Dorsolateral prefrontal cortex (tissue), 120 donors: ENCODE measurements at regions of chr1 and their contacts with region 1.

Region 1: DNA sequence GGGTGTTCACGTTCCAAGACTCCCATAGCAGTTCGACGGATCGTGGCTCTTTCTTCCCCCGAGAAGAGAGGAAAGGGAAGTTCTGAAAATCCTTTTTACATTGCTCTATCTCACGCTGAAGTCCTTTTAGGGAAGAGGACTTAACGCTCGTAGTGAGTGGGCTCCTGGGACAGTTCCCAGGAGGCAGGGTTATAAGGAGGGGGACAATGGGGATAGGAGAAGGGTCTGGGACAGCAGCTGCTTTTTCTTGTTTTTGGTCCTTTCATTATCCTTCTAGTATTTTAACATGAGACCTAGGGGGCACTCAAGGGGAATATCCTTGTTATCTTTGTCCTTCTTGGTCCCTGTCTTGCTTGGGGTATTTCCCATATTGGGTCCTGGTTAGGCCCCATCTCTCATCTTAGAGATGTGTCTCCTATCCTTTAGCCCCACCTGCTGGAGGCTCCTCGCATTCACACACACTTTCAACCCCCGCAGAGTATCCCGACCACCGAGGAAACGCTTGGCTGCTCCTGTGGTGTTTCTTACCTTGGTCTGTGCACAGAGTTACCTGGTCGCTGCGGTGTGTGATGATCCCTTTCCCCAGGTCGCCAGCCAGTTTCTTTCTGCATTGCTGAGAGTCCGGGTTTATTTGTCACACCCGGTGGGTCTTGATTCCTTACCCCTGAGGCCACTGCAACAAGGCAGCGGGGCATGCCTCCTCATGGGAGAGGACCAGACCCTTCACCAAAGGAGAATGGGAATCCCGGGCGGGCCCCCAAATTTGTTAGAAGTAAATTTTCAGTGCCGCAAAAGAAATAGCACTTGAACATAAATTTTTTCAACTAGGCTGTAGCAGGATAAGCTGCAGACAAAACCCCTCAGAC is 29.7 kb downstream of the SCCPDH start:
- DNase-seq: peak in 7 of 10 donors; percentile 46 to 68 (median 58)
- H3K4me3 ChIP-seq: no peak overlapping the region
- H3K27ac ChIP-seq: no peak overlapping the region
- H3K27me3 ChIP-seq: no peaks in the 10 kb centered on the region
- CTCF ChIP-seq: peak in 55 of 56 donors; percentile 47 to 88 (median 76)

Region 2: GRCh38 chr1:246497331-246497915 is 256.5 kb before region 1 on chr1:
- intact Hi-C with region 1: loop called in 1 of 2 experiments (anchors 2 kb)
- DNase-seq: no peak
- H3K4me3 ChIP-seq: no peak overlapping the region
- H3K27ac ChIP-seq: no peak overlapping the region
- H3K27me3 ChIP-seq: no peaks in the 10 kb centered on the region
- CTCF ChIP-seq: peak; percentile 49 to 92 (median 77)

Region 3: DNA sequence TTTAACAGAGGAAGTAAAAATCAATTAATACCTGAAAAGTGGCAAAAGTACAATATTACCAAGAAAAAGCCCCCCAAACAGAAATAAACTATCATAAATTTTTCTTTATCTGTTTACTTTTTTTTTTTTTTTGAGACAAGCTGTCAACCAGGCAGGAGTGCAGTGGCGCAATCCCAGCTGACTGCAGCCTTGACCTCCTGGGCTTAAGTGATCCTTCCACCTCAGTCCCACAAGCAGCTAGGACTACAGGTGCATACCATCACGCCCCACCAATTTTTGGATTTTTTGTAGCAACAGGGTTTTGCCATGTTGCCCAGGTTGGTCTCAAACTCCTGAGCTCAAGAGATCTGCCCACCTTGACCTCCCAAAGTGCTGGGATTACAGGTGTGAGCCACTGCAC is 195.9 kb before region 1 on chr1:
- intact Hi-C with region 1: no loop called
- DNase-seq: no peak
- H3K4me3 ChIP-seq: no peak overlapping the region
- H3K27ac ChIP-seq: no peak overlapping the region
- H3K27me3 ChIP-seq: no peaks in the 10 kb centered on the region
- CTCF ChIP-seq: no peak

Region 4: GRCh38 chr1:246579818-246580217 is 174.1 kb before region 1 on chr1:
- intact Hi-C with region 1: no loop called
- DNase-seq: no peak
- H3K4me3 ChIP-seq: peak overlapping the region in 1 of 59 donors; percentile 3
- H3K27ac ChIP-seq: peak overlapping the region in 5 of 59 donors; percentile 3 to 32 (median 11)
- H3K27me3 ChIP-seq: no peaks in the 10 kb centered on the region
- CTCF ChIP-seq: no peak

Region 5: GRCh38 chr1:246689409-246690008 is 64.4 kb before region 1 on chr1:
- intact Hi-C with region 1: loop called (anchors 2 to 10 kb)
- DNase-seq: peak in 8 of 10 donors; percentile 59 to 75 (median 61)
- H3K4me3 ChIP-seq: peak overlapping the region in 58 of 59 donors; percentile 11 to 68 (median 50)
- H3K27ac ChIP-seq: peak overlapping the region in 26 of 59 donors; percentile 5 to 90 (median 44)
- H3K27me3 ChIP-seq: no peaks in the 10 kb centered on the region
- CTCF ChIP-seq: peak; percentile 52 to 85 (median 77)